Vagina (tissue), 2 donors: ENCODE measurements at regions of chr12 and their contacts with region 1.

Region 1: DNA sequence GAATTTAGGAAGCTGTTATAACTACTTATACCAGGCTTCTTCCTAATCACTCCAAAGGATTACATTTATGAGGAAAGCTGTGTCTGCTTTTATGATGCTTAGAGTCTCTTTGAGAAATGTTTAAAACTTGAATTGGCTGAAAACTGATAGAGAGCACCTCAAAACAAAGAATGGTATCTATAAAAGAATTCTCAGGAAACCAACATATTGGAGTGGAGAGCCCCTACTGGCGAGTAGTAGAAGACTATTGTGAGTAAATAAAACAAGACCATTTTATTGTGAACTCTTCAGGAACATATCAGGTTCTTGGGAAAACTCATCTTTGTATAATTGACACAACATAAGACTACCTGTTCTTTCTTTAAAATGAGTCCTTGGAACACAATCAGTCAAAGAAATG is 578.6 kb downstream of the RERGL start:
- DNase-seq: no peak
- H3K4me3 ChIP-seq: no peak overlapping the region
- H3K27ac ChIP-seq: no peak overlapping the region
- H3K4me1 ChIP-seq: no peaks in the 10 kb centered on the region
- H3K27me3 ChIP-seq: no peaks in the 10 kb centered on the region
- CTCF ChIP-seq: no peak
- POLR2A ChIP-seq: no peak

Region 2: DNA sequence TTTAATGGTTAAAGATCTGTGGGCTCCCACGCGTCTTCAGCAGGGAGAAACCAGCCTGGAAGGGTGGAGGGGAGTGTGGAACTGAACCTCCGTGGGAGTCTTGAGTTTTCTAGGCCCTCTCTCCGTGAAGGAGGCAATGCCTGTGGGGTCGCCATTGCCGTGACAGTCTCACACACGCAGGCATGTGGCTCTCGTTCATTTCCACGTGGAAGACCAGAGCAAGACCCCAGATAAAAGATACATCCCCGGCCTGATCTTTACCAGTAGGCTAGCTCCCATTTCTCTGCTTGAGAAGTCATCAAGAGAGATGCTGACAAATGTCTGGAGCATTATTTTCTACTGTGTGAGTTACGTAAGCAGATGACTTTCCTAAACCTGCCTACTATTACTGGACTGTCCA is 413.7 kb before region 1 on chr12:
- intact Hi-C with region 1: loop called (anchors 5 kb)
- DNase-seq: no peak
- H3K4me3 ChIP-seq: no peak overlapping the region
- H3K27ac ChIP-seq: no peak overlapping the region
- H3K4me1 ChIP-seq: no peaks in the 10 kb centered on the region
- H3K27me3 ChIP-seq: no peaks in the 10 kb centered on the region
- CTCF ChIP-seq: no peak
- POLR2A ChIP-seq: no peak